Activated naive CD4-positive, alpha-beta T cell treated with anti-CD3 and anti-CD28 coated beads for 36 hours (primary cell): ENCODE measurements at regions of chr9 and their contacts with region 1.

Region 1: GRCh38 chr9:95864852-95865580 is 10.5 kb upstream of the ERCC6L2 start:
- DNase-seq: no peak
- H3K4me3 Mint-ChIP-seq: no peak overlapping the region
- H3K27ac Mint-ChIP-seq: no peak overlapping the region
- H3K4me1 Mint-ChIP-seq: peaks cover 4% of the 10 kb centered on the region
- H3K27me3 Mint-ChIP-seq: no peaks in the 10 kb centered on the region

Region 2: GRCh38 chr9:95852059-95853032 is 12.7 kb before region 1 on chr9:
- CTCF ChIA-PET with region 1: no interaction called
- intact Hi-C with region 1: loop called (anchors 1 kb)
- DNase-seq: peak; percentile 37
- H3K4me3 Mint-ChIP-seq: no peak overlapping the region
- H3K27ac Mint-ChIP-seq: no peak overlapping the region
- H3K4me1 Mint-ChIP-seq: peaks cover 22% of the 10 kb centered on the region
- H3K27me3 Mint-ChIP-seq: no peaks in the 10 kb centered on the region